B cell (primary cell): ENCODE measurements at regions of chr21 and their contacts with region 1.

Region 1: GRCh38 chr21:15039607-15040299 is 25.0 kb downstream of the NRIP1 start:
- DNase-seq: no peak
- ATAC-seq: no peak
- H3K4me3 ChIP-seq: no peak overlapping the region
- H3K4me3 Mint-ChIP-seq: no peak overlapping the region
- H3K27ac ChIP-seq: no peak overlapping the region
- H3K27ac Mint-ChIP-seq: no peak overlapping the region
- H3K4me1 ChIP-seq: peaks cover 0 to 12% of the 10 kb centered on the region in 2 donors
- H3K4me1 Mint-ChIP-seq: peaks cover 36% of the 10 kb centered on the region
- H3K27me3 ChIP-seq: no peaks in the 10 kb centered on the region
- H3K27me3 Mint-ChIP-seq: no peaks in the 10 kb centered on the region
- CTCF ChIP-seq: no peak

Region 2: GRCh38 chr21:15051644-15052458 is 12.1 kb after region 1 on chr21:
- CTCF ChIA-PET with region 1: no interaction called
- POLR2A ChIA-PET with region 1: no interaction called
- intact Hi-C with region 1: loop called (anchors 2 kb)
- DNase-seq: no peak
- ATAC-seq: peak; percentile 45
- H3K4me3 ChIP-seq: peak overlapping the region in 4 of 5 experiments; percentile 9 to 32 (median 20)
- H3K4me3 Mint-ChIP-seq: peak overlapping the region; percentile 75
- H3K27ac ChIP-seq: no peak overlapping the region
- H3K27ac Mint-ChIP-seq: peak overlapping the region; percentile 34
- H3K4me1 ChIP-seq: peaks cover 28 to 53% of the 10 kb centered on the region in 2 donors
- H3K4me1 Mint-ChIP-seq: peaks cover 75% of the 10 kb centered on the region
- H3K27me3 ChIP-seq: no peaks in the 10 kb centered on the region
- H3K27me3 Mint-ChIP-seq: no peaks in the 10 kb centered on the region
- CTCF ChIP-seq: no peak

Region 3: GRCh38 chr21:15408089-15408488 is 368.3 kb after region 1 on chr21:
- CTCF ChIA-PET with region 1: no interaction called
- POLR2A ChIA-PET with region 1: no interaction called
- intact Hi-C with region 1: no loop called
- DNase-seq: no peak
- ATAC-seq: no peak
- H3K4me3 ChIP-seq: no peak overlapping the region
- H3K4me3 Mint-ChIP-seq: no peak overlapping the region
- H3K27ac ChIP-seq: no peak overlapping the region
- H3K27ac Mint-ChIP-seq: no peak overlapping the region
- H3K4me1 ChIP-seq: no peaks in the 10 kb centered on the region
- H3K4me1 Mint-ChIP-seq: no peaks in the 10 kb centered on the region
- H3K27me3 ChIP-seq: no peaks in the 10 kb centered on the region
- H3K27me3 Mint-ChIP-seq: no peaks in the 10 kb centered on the region
- CTCF ChIP-seq: no peak

Region 4: GRCh38 chr21:15682977-15683376 is 643.2 kb after region 1 on chr21:
- CTCF ChIA-PET with region 1: no interaction called
- POLR2A ChIA-PET with region 1: no interaction called
- intact Hi-C with region 1: no loop called
- DNase-seq: no peak
- ATAC-seq: no peak
- H3K4me3 ChIP-seq: no peak overlapping the region
- H3K4me3 Mint-ChIP-seq: no peak overlapping the region
- H3K27ac ChIP-seq: no peak overlapping the region
- H3K27ac Mint-ChIP-seq: no peak overlapping the region
- H3K4me1 ChIP-seq: no peaks in the 10 kb centered on the region
- H3K4me1 Mint-ChIP-seq: no peaks in the 10 kb centered on the region
- H3K27me3 ChIP-seq: no peaks in the 10 kb centered on the region
- H3K27me3 Mint-ChIP-seq: no peaks in the 10 kb centered on the region
- CTCF ChIP-seq: no peak